ENCODE measurements at regions of chr3 and their contacts with region 1.

Region 1: GRCh38 chr3:141452036-141452435 is 34.8 kb upstream of the RASA2 start:
- DNase-seq: no peak
- ATAC-seq: peak; percentile 69

Region 2: DNA sequence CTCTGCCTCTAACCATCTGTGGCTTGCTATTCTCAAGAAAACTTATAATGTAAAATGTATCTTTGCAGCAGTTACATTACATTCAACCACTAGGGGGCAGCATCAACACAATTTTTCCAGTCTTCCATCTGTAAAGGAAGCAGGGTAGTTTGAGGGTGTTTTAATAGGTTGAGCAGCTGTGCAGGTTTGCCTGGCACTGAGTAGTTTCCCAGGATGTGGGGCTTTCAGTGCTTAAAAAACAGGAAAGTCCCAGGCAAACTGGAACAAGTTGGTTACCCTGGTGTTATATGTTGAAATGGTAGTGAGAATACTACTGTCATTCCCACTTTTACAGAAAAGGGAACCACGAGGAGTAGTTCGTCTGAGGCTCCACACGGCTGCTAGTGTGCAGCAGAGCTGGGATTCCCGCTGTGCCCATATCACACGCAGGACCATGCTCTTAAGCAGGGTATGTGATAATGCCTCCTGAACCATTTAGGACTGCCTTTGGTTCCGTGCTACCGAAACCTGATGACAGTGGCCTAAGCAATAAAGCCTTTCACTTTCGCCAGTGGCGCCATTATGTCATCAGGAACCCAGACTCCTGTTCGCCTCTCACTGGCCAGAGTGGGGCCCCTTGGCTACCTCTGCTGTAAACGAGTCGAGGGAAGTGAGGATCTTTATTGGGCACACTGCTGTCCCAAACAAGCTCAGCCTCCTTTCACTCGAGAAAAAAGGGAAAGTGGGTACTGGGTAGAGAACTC is 148.4 kb before region 1 on chr3:
- intact Hi-C with region 1: loop called (anchors 2 kb)
- DNase-seq: no peak
- ATAC-seq: peak; percentile 41

Region 3: GRCh38 chr3:141311496-141312353 is 140.3 kb before region 1 on chr3:
- intact Hi-C with region 1: loop called (anchors 2 kb)
- DNase-seq: peak; percentile 99
- ATAC-seq: peak; percentile 98

Region 4: GRCh38 chr3:141360888-141361598 is 91.0 kb before region 1 on chr3:
- intact Hi-C with region 1: loop called (anchors 1 kb)
- DNase-seq: no peak
- ATAC-seq: peak; percentile 80